Dorsolateral prefrontal cortex (tissue), 120 donors: ENCODE measurements at regions of chr13 and their contacts with region 1.

Region 1: DNA sequence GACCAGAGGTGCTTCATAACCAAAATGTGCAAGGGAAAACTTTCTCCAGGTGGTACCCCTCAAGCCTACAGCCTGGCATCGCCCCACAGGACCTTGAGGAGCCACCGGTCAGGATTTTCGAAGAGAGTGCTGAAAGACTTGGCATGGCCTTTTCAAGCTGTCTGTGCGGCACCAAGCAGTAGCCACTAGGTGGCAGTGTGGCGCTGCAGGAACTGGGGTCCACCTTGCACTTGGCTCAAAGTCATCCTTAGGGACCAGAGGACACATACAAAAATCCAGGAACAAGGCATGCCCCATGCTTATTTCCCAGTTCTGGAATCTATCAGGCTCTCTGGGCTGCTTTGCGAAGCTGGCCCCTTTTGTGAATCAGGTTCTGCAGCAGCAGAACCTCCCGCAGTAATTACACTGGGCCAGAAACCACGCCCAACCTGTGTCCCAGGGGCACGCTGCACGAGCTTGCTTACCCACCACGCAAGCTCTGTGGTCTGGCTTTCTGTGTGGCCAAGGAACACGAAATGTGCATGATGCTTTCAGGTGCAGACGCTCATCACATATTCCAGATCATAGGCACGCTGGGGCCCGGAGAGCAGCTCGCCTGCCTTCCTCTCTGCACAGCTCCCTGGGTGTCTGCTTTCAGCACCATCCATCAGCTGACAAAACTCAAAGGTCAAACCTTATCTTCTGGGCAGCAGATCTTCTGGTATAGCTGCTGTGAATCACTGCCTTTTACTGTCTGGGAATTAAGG is 87.2 kb downstream of the SLC7A1 start:
- DNase-seq: peak; percentile 82 to 92 (median 88)
- H3K4me3 ChIP-seq: no peak overlapping the region
- H3K27ac ChIP-seq: peak overlapping the region in 33 of 59 donors; percentile 2 to 80 (median 39)
- H3K27me3 ChIP-seq: peaks cover 0 to 12% (median 0%) of the 10 kb centered on the region in 45 donors
- CTCF ChIP-seq: peak; percentile 83 to 99 (median 97)

Region 2: DNA sequence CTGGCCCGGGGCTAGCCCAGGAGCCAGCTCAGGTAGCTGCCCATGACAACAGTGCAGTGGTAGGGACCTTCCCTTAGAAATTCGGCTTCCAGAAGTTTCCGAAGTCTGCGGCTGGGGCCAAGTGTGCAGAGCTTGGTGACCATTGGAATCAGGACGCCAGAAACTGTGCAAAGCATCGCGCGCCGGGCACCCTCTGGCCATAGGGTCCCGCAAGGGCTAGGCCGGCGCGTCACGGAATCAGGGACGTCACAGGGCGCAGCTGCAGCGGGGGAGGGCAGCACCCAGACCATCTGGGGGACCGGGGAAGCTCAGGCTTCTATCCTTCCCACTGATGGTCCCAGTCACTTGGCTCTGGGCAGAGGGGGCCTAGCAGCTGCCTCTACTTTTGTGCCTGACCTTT is 469.1 kb before region 1 on chr13:
- intact Hi-C with region 1: no loop called
- DNase-seq: no peak
- H3K4me3 ChIP-seq: no peak overlapping the region
- H3K27ac ChIP-seq: no peak overlapping the region
- H3K27me3 ChIP-seq: no peaks in the 10 kb centered on the region
- CTCF ChIP-seq: no peak

Region 3: GRCh38 chr13:29411481-29411880 is 96.8 kb before region 1 on chr13:
- intact Hi-C with region 1: no loop called
- DNase-seq: no peak
- H3K4me3 ChIP-seq: no peak overlapping the region
- H3K27ac ChIP-seq: no peak overlapping the region
- H3K27me3 ChIP-seq: no peaks in the 10 kb centered on the region
- CTCF ChIP-seq: no peak

Region 4: GRCh38 chr13:29595380-29596063 is 87.2 kb after region 1 on chr13 and contains the start of gene SLC7A1:
- intact Hi-C with region 1: loop called in 1 of 2 experiments (anchors 5 kb)
- DNase-seq: peak; percentile 50 to 86 (median 65)
- H3K4me3 ChIP-seq: peak within 1 kb of the TSS; percentile 62 to 94 (median 84)
- H3K27ac ChIP-seq: peak within 1 kb of the TSS in 57 of 59 donors; percentile 8 to 92 (median 77)
- H3K27me3 ChIP-seq: no peaks in the 10 kb centered on the region
- CTCF ChIP-seq: peak in 6 of 56 donors; percentile 6 to 19 (median 10)
- total RNA-seq, gene SLC7A1: 36.0 to 104 (median 59.3) TPM

Region 5: GRCh38 chr13:29707876-29708543 is 199.7 kb after region 1 on chr13:
- intact Hi-C with region 1: loop called in 1 of 2 experiments (anchors 2 kb)
- DNase-seq: no peak
- H3K4me3 ChIP-seq: no peak overlapping the region
- H3K27ac ChIP-seq: no peak overlapping the region
- H3K27me3 ChIP-seq: peaks cover 0 to under 1% (median 0%) of the 10 kb centered on the region in 45 donors
- CTCF ChIP-seq: peak in 47 of 56 donors; percentile 8 to 64 (median 42)

Region 6: GRCh38 chr13:29763436-29764180 is 255.3 kb after region 1 on chr13:
- intact Hi-C with region 1: loop called in 1 of 2 experiments (anchors 5 kb)
- DNase-seq: no peak
- H3K4me3 ChIP-seq: no peak overlapping the region
- H3K27ac ChIP-seq: peak overlapping the region in 5 of 59 donors; percentile 4 to 85 (median 11)
- H3K27me3 ChIP-seq: no peaks in the 10 kb centered on the region
- CTCF ChIP-seq: no peak

Region 7: GRCh38 chr13:30114571-30115256 is 606.4 kb after region 1 on chr13:
- intact Hi-C with region 1: loop called (anchors 2 kb)
- DNase-seq: peak; percentile 85 to 92 (median 90)
- H3K4me3 ChIP-seq: peak overlapping the region; percentile 19 to 84 (median 64)
- H3K27ac ChIP-seq: peak overlapping the region in 57 of 59 donors; percentile 30 to 95 (median 79)
- H3K27me3 ChIP-seq: no peaks in the 10 kb centered on the region
- CTCF ChIP-seq: peak; percentile 66 to 98 (median 92)